Activated T-helper 2 cell treated with anti-CD3 and anti-CD28 coated beads, Interferon-gamma antibody, Interleukin-2, Interleukin-4, amounts not matched to agents 10 μg/mL and 5 μg/mL and 100 μg/mL, durations not matched to agents 14 hours and 24 hours and 36 hours (primary cell): ENCODE measurements at regions of chr11 and their contacts with region 1.

Region 1: GRCh38 chr11:18540207-18541009 is 13.7 kb upstream of the TSG101 start:
- DNase-seq: no peak
- H3K4me3 Mint-ChIP-seq: no peak overlapping the region
- H3K27ac Mint-ChIP-seq: no peak overlapping the region
- H3K4me1 Mint-ChIP-seq: peaks cover 6% of the 10 kb centered on the region
- H3K27me3 Mint-ChIP-seq: no peaks in the 10 kb centered on the region

Region 2: GRCh38 chr11:18594999-18595749 is 54.8 kb after region 1 on chr11:
- intact Hi-C with region 1: loop called (anchors 5 kb)
- DNase-seq: no peak
- H3K4me3 Mint-ChIP-seq: no peak overlapping the region
- H3K27ac Mint-ChIP-seq: no peak overlapping the region
- H3K4me1 Mint-ChIP-seq: peaks cover 9% of the 10 kb centered on the region
- H3K27me3 Mint-ChIP-seq: no peaks in the 10 kb centered on the region

Region 3: GRCh38 chr11:18650859-18651557 is 110.6 kb after region 1 on chr11:
- intact Hi-C with region 1: loop called (anchors 1 kb)
- DNase-seq: no peak
- H3K4me3 Mint-ChIP-seq: no peak overlapping the region
- H3K27ac Mint-ChIP-seq: no peak overlapping the region
- H3K4me1 Mint-ChIP-seq: peaks cover 8% of the 10 kb centered on the region
- H3K27me3 Mint-ChIP-seq: no peaks in the 10 kb centered on the region

Region 4: DNA sequence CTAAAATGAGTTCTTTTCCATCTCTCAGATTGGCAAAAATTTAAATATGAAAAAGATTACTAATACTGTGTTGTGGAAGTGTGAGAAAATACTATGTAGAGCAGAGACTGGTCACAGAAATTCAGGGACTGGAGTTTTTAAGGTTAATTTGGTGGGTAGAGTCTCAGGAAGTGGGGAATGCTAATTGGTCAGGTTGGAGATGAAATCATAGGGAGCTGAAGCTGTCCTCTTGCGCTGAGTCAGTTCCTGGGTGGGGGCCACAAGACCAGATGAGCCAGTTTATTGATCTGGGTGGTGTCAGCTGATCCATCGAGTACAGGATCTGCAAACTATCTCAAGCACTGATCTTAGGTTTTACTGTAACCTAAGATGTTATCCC is 128.8 kb after region 1 on chr11:
- intact Hi-C with region 1: no loop called
- DNase-seq: peak; percentile 10
- H3K4me3 Mint-ChIP-seq: no peak overlapping the region
- H3K27ac Mint-ChIP-seq: peak overlapping the region; percentile 81
- H3K4me1 Mint-ChIP-seq: peaks cover 38% of the 10 kb centered on the region
- H3K27me3 Mint-ChIP-seq: peaks cover 12% of the 10 kb centered on the region

Region 5: GRCh38 chr11:18731949-18732821 is 191.8 kb after region 1 on chr11:
- intact Hi-C with region 1: loop called (anchors 1 kb)
- DNase-seq: peak; percentile 40
- H3K4me3 Mint-ChIP-seq: no peak overlapping the region
- H3K27ac Mint-ChIP-seq: no peak overlapping the region
- H3K4me1 Mint-ChIP-seq: peaks cover 2% of the 10 kb centered on the region
- H3K27me3 Mint-ChIP-seq: peaks cover 10% of the 10 kb centered on the region

Region 6: GRCh38 chr11:18768472-18768901 is 228.1 kb after region 1 on chr11:
- intact Hi-C with region 1: loop called (anchors 1 kb)
- DNase-seq: no peak
- H3K4me3 Mint-ChIP-seq: no peak overlapping the region
- H3K27ac Mint-ChIP-seq: no peak overlapping the region
- H3K4me1 Mint-ChIP-seq: peaks cover 24% of the 10 kb centered on the region
- H3K27me3 Mint-ChIP-seq: no peaks in the 10 kb centered on the region